Ascending aorta (tissue), 2 donors: ENCODE measurements at regions of chr4 and their contacts with region 1.

Region 1: DNA sequence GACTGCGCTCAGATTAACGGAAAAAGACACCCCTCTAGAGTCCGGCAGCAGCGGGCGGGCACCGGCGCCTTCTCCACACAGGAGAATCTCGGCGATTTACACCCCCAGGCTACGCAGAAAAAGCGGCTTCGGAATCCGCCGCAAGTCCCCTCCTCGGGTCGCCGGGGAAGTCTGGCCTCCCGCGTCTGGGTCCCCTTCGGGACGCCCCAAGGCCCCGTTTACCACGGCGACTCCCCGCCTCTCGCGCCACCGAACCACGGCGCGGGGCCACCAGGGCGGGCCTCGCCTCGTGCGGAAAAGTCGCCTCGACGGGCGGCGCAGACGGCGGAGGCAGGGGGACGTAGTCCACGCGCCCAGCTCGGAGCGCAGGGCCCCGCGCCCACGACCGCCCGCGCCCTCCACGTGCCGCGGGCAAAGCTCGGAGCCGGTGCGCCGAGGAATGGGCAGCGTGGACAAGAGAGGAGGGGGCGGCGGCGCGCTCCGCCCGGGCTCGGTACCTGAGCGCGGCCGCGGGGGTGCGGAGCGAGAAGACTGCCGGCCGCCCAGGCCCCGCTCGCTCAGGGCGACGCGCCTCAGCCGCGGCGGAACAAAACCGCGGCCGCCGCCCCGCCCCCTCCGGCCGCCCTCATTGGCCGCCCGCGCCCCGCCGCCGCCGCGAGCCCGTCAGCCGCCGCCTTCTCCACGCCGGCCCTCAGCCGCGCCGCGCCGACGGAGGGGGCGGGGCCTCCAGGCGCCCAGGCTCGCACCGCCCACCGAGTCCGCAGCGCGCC is at the start of gene FAM53A:
- DNase-seq: peak in 1 of 2 donors; percentile 59
- H3K4me3 ChIP-seq: peak within 1 kb of the TSS; percentile 73 to 76
- H3K27ac ChIP-seq: peak within 1 kb of the TSS; percentile 64 to 85
- H3K4me1 ChIP-seq: peaks cover 0 to 7% of the 10 kb centered on the region in 2 donors
- H3K27me3 ChIP-seq: no peaks in the 10 kb centered on the region
- CTCF ChIP-seq: no peak
- total RNA-seq, gene FAM53A: not detected

Region 2: GRCh38 chr4:1579901-1580691 is 103.8 kb before region 1 on chr4:
- intact Hi-C with region 1: loop called (anchors 2 kb)
- DNase-seq: peak; percentile 72 to 95
- H3K4me3 ChIP-seq: peak overlapping the region; percentile 58 to 95
- H3K27ac ChIP-seq: peak overlapping the region; percentile 63 to 74
- H3K4me1 ChIP-seq: peaks cover 4% of the 10 kb centered on the region in 2 donors
- H3K27me3 ChIP-seq: no peaks in the 10 kb centered on the region
- CTCF ChIP-seq: no peak

Region 3: GRCh38 chr4:1666391-1666790 is 17.5 kb before region 1 on chr4:
- intact Hi-C with region 1: no loop called
- DNase-seq: no peak
- H3K4me3 ChIP-seq: no peak overlapping the region
- H3K27ac ChIP-seq: no peak overlapping the region
- H3K4me1 ChIP-seq: no peaks in the 10 kb centered on the region
- H3K27me3 ChIP-seq: no peaks in the 10 kb centered on the region
- CTCF ChIP-seq: no peak

Region 4: DNA sequence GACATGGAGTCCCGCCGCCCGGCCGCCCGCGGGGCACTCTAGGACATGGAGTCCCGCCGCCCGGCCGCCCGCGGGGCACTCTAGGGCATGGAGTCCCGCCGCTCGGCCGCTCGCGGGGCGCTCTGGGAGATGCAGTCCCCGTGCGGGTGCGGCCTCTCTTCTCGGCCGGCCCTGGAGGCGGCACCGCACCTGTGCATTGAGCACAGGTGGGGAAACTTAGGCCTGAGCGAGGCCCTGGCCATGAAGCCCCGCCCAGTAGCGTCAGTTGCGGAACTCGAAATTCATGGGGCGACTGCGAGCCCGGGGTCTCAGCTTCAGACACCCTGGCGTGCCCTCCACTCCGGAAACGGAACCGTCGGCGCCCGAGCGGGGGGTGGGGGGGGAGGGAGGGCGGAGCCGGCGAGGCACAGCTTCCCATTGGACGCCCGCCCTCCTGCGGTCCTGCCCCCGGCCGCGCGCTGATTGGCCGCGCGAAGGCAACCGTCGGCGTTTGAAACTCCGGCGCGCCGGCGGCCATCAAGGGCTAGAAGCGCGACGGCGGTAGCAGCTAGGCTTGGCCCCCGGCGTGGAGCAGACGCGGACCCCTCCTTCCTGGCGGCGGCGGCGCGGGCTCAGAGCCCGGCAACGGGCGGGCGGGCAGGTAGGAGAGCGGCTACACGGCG is 37.2 kb after region 1 on chr4 and contains the starts of genes TACC3 and TMEM129:
- intact Hi-C with region 1: loop called (anchors 2 kb)
- DNase-seq: peak; percentile 84 to 95
- H3K4me3 ChIP-seq: peak within 1 kb of the TSS; percentile 81 to 87
- H3K27ac ChIP-seq: peak within 1 kb of the TSS; percentile 87 to 90
- H3K4me1 ChIP-seq: peaks cover 12 to 18% of the 10 kb centered on the region in 2 donors
- H3K27me3 ChIP-seq: no peaks in the 10 kb centered on the region
- CTCF ChIP-seq: no peak
- total RNA-seq, gene TACC3: 2.7 TPM
- total RNA-seq, gene TMEM129: 192 TPM

Region 5: DNA sequence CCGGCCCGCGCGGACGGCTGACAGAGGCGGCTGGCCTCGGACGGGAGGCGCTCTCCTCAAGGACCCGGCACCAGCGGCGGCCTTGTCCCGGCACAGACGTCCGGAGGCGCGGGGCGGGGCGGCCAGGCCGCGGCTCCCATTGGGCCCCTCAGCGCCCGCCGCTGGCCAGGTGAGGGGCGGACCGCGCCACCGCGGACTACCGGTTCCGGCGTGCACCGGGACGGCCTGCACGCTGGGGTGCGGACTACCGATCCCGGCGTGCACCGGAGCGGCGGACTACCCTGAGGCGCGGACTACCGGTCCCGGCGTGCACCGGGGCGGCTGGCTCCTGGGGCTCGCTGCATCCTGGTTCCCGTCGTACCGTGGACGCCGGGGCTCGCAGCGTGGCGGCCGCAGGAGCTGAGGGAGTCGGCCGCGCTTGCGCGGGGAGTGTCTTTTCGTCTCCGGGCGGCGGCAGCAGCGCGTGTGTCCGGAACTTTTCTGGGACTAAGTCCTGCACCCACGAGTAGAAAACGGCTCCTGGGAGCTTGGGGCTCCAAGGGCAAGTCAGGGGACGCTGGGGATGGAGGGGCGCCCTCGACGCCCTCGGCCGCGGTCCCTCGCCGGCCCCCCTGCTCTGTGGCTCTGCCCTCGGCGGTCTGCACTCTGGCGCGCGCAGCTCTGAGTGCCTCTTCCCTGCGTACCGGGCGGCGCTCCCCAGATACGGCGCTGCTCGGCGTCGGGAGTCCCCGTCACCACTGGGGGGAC is 172.3 kb after region 1 on chr4 and contains the start of gene LETM1:
- intact Hi-C with region 1: loop called (anchors 5 kb)
- DNase-seq: peak; percentile 86 to 97
- H3K4me3 ChIP-seq: peak within 1 kb of the TSS; percentile 85 to 86
- H3K27ac ChIP-seq: peak within 1 kb of the TSS; percentile 78 to 82
- H3K4me1 ChIP-seq: peaks cover 0 to 10% of the 10 kb centered on the region in 2 donors
- H3K27me3 ChIP-seq: no peaks in the 10 kb centered on the region
- CTCF ChIP-seq: peak in 1 of 3 experiments; percentile 28
- total RNA-seq, gene LETM1: 37.7 TPM

Region 6: DNA sequence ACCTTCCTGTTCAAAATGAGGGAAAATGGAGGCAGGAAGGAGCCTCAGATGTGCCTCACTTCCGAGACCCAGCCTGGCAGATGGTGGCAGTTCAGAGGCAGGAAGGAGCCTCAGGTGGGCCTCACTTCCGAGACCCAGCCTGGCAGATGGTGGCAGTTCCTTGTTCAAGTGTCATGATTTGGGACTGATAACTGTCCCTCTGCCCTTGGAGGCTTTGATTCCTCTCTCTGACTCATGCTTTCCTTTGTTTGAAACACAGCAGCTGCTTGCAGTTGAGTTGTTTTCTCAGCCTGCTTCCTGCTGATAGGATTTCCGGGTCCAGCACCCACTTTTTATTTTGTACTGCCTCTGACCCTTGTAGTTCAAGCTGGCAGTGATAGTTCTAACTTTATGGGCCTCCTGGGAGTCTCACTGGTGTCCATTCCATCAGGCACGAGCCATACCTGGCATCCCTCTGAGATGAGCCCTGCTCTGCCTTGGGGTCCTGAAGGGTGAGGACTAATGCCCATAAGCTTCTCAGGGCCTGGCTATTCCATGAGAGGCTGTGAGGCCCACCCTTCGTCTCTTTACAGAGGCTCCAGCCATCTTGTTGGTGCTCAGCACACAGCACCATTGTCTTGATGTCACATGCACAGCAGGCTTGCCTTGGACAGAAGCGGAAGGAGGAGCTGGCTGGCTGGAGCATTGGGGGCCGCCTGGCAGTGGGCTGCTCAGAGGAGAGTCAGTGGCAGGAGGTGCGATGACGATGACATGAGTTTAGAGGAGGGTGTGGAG is 1621.9 kb after region 1 on chr4:
- intact Hi-C with region 1: no loop called
- DNase-seq: peak in 1 of 2 donors; percentile 50
- H3K4me3 ChIP-seq: no peak overlapping the region
- H3K27ac ChIP-seq: no peak overlapping the region
- H3K4me1 ChIP-seq: no peaks in the 10 kb centered on the region
- H3K27me3 ChIP-seq: no peaks in the 10 kb centered on the region
- CTCF ChIP-seq: no peak